Activated CD4-positive, alpha-beta memory T cell treated with anti-CD3 and anti-CD28 coated beads for 36 hours (primary cell): ENCODE measurements at regions of chr13 and their contacts with region 1.

Region 1: DNA sequence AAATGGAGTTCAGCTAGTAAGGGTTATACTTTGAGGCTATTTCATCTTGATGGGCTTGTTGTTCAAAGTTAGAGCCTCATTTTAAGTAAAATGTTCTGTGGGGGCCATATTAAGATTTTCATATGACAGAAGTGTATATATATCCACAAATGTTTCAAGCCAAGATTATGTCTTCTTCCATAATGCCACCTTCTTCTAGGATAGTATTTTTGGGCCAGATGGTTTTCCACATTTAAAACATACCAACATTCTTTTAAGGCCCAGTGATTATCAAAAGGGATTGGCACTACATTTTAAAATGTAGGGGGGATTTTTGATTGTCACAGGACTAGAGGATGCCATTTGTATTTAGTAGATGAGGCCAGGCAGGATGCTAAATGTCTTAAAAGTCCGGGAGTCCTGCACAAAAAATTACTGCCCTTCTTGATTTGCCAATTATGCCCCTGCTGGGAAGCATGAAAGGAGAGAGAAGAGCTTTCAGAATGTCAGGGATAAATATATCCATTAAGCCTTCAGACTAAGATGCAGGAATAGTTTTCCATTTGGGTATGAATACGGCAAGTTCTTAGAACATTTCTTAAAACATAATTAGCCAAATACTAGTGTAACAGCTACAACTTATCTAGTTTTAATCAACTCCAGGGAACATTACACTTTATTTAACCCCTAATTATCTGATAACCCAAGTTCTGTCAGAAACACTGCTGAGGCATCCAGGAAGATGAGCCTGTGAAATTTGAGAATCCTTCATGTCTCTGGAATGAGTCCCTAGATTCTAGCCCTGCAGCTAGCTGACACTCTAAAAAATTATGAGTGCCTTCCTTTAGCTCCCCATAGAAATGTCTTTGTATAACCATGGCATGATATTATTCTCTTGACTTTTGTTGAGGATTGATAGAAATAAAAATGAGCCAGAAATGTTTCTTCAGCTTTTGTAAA is 34.0 kb downstream of the ITM2B start:
- DNase-seq: no peak
- H3K4me3 Mint-ChIP-seq: no peak overlapping the region
- H3K27ac Mint-ChIP-seq: no peak overlapping the region
- H3K4me1 Mint-ChIP-seq: peaks cover 39% of the 10 kb centered on the region
- H3K27me3 Mint-ChIP-seq: no peaks in the 10 kb centered on the region

Region 2: DNA sequence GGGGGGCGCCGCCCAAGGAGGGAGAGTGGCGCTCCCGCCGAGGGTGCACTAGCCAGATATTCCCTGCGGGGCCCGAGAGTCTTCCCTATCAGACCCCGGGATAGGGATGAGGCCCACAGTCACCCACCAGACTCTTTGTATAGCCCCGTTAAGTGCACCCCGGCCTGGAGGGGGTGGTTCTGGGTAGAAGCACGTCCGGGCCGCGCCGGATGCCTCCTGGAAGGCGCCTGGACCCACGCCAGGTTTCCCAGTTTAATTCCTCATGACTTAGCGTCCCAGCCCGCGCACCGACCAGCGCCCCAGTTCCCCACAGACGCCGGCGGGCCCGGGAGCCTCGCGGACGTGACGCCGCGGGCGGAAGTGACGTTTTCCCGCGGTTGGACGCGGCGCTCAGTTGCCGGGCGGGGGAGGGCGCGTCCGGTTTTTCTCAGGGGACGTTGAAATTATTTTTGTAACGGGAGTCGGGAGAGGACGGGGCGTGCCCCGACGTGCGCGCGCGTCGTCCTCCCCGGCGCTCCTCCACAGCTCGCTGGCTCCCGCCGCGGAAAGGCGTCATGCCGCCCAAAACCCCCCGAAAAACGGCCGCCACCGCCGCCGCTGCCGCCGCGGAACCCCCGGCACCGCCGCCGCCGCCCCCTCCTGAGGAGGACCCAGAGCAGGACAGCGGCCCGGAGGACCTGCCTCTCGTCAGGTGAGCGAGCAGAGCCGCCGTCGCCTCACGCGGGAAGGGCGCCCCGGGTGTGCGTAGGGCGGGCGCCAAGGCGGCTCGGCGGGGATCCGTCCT is 36.6 kb after region 1 on chr13 and contains the start of gene RB1:
- CTCF ChIA-PET with region 1: no interaction called
- POLR2A ChIA-PET with region 1: no interaction called
- intact Hi-C with region 1: loop called (anchors 2 kb)
- DNase-seq: peak; percentile 94
- H3K4me3 Mint-ChIP-seq: peak within 1 kb of the TSS; percentile 97
- H3K27ac Mint-ChIP-seq: peak within 1 kb of the TSS; percentile 93
- H3K4me1 Mint-ChIP-seq: peaks cover 27% of the 10 kb centered on the region
- H3K27me3 Mint-ChIP-seq: no peaks in the 10 kb centered on the region
- total RNA-seq, gene RB1: 26.5 to 28.8 TPM